ENCODE measurements at regions of chr2 and their contacts with region 1.

Region 1: GRCh38 chr2:158094487-158095092 is 7.1 kb upstream of the UPP2 start:
- DNase-seq: peak in 1 of 2 donors; percentile 13
- ATAC-seq: peak; percentile 88

Region 2: GRCh38 chr2:158125756-158126498 is 31.3 kb after region 1 on chr2:
- intact Hi-C with region 1: loop called in 1 of 2 experiments (anchors 2 kb)
- DNase-seq: no peak
- ATAC-seq: peak; percentile 21

Region 3: DNA sequence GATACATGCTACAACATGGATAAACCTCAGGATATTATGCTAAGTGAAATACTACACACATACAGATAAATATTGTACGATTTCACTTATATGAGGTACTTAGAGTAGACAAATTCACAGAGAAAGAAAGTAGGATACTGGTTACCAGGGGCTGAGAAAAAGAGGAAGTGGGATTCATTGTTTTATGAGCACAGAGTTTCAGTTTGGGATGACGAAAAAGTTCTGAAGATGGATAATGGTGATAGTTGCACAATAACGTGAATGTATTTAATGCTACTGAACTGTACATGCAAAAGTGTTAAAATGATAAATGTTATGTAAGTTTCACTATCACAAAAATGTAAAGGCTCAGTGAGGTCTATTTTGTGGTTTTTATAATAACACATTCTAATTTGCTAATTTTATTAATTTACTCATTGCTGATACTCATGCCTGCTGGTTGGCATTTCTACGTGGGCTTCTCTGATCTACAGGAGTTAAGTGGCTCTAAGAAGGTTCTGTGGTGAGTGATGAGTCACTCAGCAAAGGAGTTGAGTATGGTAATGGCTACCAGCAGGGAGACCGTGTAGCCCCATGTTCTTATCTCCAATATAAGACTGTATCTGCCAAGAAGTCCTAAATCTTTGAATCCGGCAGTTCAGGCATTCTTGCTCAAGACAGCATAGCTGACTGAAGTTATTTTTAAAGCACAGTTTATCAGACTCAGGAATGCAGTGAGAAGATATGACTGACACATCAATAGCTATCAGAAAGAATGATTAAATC is 48.2 kb after region 1 on chr2:
- intact Hi-C with region 1: no loop called
- DNase-seq: no peak
- ATAC-seq: no peak

Measured in left colon (tissue), 2 donors.